GM12878 (cell line): ENCODE measurements at regions of chr10 and their contacts with region 1.

Region 1: GRCh38 chr10:89029785-89030437 is 39.3 kb downstream of the FAS start:
- DNase-seq: peak; percentile 24
- ATAC-seq: peak; percentile 70
- H3K4me3 ChIP-seq: no peak overlapping the region
- H3K27ac ChIP-seq: no peak overlapping the region
- H3K4me1 ChIP-seq: peaks cover 26% of the 10 kb centered on the region
- H3K27me3 ChIP-seq: no peaks in the 10 kb centered on the region
- CTCF ChIP-seq: peak; percentile 76 to 90 (median 82)
- EP300 ChIP-seq: no peak
- POLR2A ChIP-seq: no peak
- RAD21 ChIP-seq: peak; percentile 86

Region 2: DNA sequence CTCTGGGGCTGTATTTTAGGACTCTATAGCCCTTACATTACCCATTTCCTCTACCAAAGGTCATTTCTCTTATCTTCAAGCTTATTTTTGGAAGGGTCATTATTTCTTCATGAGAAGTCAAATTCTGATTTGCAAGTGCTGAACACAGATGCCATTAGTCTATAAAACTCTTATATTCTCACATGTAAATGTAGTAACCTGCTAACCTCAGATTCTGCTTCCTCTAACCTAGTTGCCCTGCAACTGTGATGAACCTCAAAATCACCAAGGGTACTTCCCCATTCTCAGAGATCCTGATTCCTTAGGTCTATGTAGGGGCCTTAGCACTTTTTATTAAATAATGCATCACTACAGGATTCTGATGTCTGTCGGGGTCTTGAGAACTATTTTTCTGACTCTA is 33.0 kb before region 1 on chr10:
- CTCF ChIA-PET with region 1: interaction called, 29 read pairs
- POLR2A ChIA-PET with region 1: interaction called, 3 read pairs
- RAD21 ChIA-PET with region 1: interaction called, 16 read pairs
- SMC1A ChIA-PET with region 1: interaction called, 10 read pairs
- in situ Hi-C with region 1: no loop called
- intact Hi-C with region 1: no loop called
- DNase-seq: peak; percentile 47
- ATAC-seq: peak; percentile 54
- H3K4me3 ChIP-seq: peak overlapping the region; percentile 37; the same call in 1 of the 2 replicates
- H3K27ac ChIP-seq: peak overlapping the region; percentile 3
- H3K4me1 ChIP-seq: peaks cover 34% of the 10 kb centered on the region
- H3K27me3 ChIP-seq: no peaks in the 10 kb centered on the region
- CTCF ChIP-seq: no peak
- EP300 ChIP-seq: no peak
- POLR2A ChIP-seq: no peak
- RAD21 ChIP-seq: no peak

Region 3: GRCh38 chr10:89079961-89080360 is 50.0 kb after region 1 on chr10:
- CTCF ChIA-PET with region 1: interaction called, 14 read pairs
- POLR2A ChIA-PET with region 1: interaction called, 5 read pairs
- RAD21 ChIA-PET with region 1: interaction called, 4 read pairs
- SMC1A ChIA-PET with region 1: interaction called, 4 read pairs
- in situ Hi-C with region 1: no loop called
- intact Hi-C with region 1: loop called (anchors 5 kb)
- DNase-seq: no peak
- ATAC-seq: no peak
- H3K4me3 ChIP-seq: no peak overlapping the region
- H3K27ac ChIP-seq: no peak overlapping the region
- H3K4me1 ChIP-seq: peaks cover 10% of the 10 kb centered on the region; the same call in 1 of the 2 replicates
- H3K27me3 ChIP-seq: no peaks in the 10 kb centered on the region
- CTCF ChIP-seq: no peak
- EP300 ChIP-seq: no peak
- POLR2A ChIP-seq: no peak
- RAD21 ChIP-seq: no peak

Region 4: DNA sequence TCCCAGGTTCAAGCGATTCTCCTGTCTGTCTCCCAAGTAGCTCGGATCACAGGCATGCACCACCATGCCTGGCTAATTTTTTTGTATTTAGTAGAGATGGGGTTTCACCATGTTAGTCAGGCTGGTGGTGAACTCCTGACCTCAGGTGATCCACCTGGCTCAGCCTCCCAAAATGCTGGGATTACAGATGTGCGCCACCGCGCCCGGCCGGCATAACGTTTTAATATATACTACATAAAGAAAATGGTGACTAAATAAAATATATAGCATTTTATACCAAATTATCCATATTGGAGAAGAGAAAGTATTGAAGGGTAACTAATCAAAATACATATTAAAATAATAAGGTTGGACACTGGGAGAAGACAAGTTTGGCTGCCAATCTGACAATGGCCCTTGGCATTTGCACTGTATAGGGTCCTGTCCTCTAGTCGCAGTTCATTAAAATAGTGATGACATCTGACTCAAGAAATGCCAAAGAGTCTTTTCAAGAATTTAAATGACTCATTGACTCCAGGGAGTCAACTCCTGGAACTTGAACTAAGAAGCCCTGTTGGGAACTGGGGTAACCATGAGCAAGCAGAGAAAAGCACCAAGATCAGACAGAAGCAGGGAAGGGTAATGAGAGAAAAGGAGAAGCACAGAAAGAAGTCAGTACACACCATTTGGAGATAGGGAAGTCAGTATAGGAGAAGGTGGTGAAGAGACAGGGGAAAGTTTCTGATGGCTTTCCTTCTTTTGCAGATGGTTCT is 86.1 kb after region 1 on chr10:
- CTCF ChIA-PET with region 1: interaction called, 20 read pairs
- POLR2A ChIA-PET with region 1: no interaction called
- RAD21 ChIA-PET with region 1: interaction called, 7 read pairs
- SMC1A ChIA-PET with region 1: interaction called, 14 read pairs
- in situ Hi-C with region 1: no loop called
- intact Hi-C with region 1: loop called (anchors 2 kb)
- DNase-seq: no peak
- ATAC-seq: no peak
- H3K4me3 ChIP-seq: no peak overlapping the region
- H3K27ac ChIP-seq: no peak overlapping the region
- H3K4me1 ChIP-seq: no peaks in the 10 kb centered on the region
- H3K27me3 ChIP-seq: no peaks in the 10 kb centered on the region
- CTCF ChIP-seq: no peak
- EP300 ChIP-seq: no peak
- POLR2A ChIP-seq: no peak
- RAD21 ChIP-seq: no peak

Region 5: GRCh38 chr10:89301721-89302445 is 272.0 kb after region 1 on chr10 and contains the start of gene IFIT2:
- CTCF ChIA-PET with region 1: no interaction called
- POLR2A ChIA-PET with region 1: no interaction called
- RAD21 ChIA-PET with region 1: no interaction called
- SMC1A ChIA-PET with region 1: no interaction called
- in situ Hi-C with region 1: no loop called
- intact Hi-C with region 1: no loop called
- DNase-seq: peak; percentile 66
- ATAC-seq: peak; percentile 88
- H3K4me3 ChIP-seq: peak within 1 kb of the TSS; percentile 79
- H3K27ac ChIP-seq: peak within 1 kb of the TSS; percentile 64
- H3K4me1 ChIP-seq: peaks cover 3% of the 10 kb centered on the region
- H3K27me3 ChIP-seq: no peaks in the 10 kb centered on the region
- CTCF ChIP-seq: no peak
- EP300 ChIP-seq: no peak
- POLR2A ChIP-seq: peak; percentile 81
- RAD21 ChIP-seq: no peak
- polyA plus RNA-seq, gene IFIT2: 11.8 to 14.8 TPM

Region 6: DNA sequence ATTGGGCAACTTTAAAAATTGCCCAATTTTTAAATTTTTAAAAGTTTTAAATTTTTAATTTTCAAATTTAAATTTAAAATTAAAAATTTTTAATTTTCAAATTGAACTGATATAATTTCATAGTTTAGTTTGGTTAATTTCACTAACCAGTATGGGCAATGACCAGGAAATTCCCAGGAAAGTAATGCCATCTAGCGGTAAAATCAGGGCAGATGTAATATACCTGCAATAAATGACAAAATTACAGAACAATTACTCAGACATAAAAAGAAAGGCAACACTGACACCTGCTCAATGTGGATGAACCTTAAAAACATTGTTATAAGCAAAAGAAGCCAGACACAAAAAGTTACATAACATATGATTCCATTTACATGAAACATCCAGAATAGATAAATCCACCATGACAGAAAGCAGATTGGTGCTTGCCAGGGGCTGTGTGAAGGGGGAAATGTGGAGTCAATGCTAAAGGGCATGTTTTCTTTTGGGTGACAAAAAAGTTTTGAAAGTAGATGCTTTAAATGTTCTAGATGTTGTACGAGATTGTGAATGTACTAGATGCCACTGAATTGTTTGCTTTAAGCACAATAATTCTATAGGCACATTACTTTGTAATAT is 534.1 kb after region 1 on chr10:
- CTCF ChIA-PET with region 1: no interaction called
- POLR2A ChIA-PET with region 1: no interaction called
- RAD21 ChIA-PET with region 1: no interaction called
- SMC1A ChIA-PET with region 1: no interaction called
- in situ Hi-C with region 1: loop called (anchors 10 kb)
- intact Hi-C with region 1: loop called (anchors 10 kb)
- DNase-seq: peak; percentile 3
- ATAC-seq: peak; percentile 82
- H3K4me3 ChIP-seq: no peak overlapping the region
- H3K27ac ChIP-seq: no peak overlapping the region
- H3K4me1 ChIP-seq: no peaks in the 10 kb centered on the region
- H3K27me3 ChIP-seq: no peaks in the 10 kb centered on the region
- CTCF ChIP-seq: peak; percentile 51 to 57 (median 57)
- EP300 ChIP-seq: no peak
- POLR2A ChIP-seq: no peak
- RAD21 ChIP-seq: peak; percentile 87